Kidney (tissue), 22 donors: ENCODE measurements at regions of chr7 and their contacts with region 1.

Region 1: GRCh38 chr7:108181073-108181985 is 51.2 kb upstream of the LAMB4 start:
- DNase-seq: peak in 2 of 5 donors; percentile 73 to 74
- H3K4me3 ChIP-seq: no peak overlapping the region
- H3K27ac ChIP-seq: no peak overlapping the region
- H3K4me1 ChIP-seq: no peaks in the 10 kb centered on the region
- H3K27me3 ChIP-seq: no peaks in the 10 kb centered on the region
- CTCF ChIP-seq: peak; percentile 75

Region 2: GRCh38 chr7:108045154-108045553 is 136.2 kb before region 1 on chr7:
- intact Hi-C with region 1: no loop called
- DNase-seq: peak in 1 of 5 donors; percentile 34
- H3K4me3 ChIP-seq: no peak overlapping the region
- H3K27ac ChIP-seq: no peak overlapping the region
- H3K4me1 ChIP-seq: no peaks in the 10 kb centered on the region
- H3K27me3 ChIP-seq: no peaks in the 10 kb centered on the region
- CTCF ChIP-seq: no peak

Region 3: DNA sequence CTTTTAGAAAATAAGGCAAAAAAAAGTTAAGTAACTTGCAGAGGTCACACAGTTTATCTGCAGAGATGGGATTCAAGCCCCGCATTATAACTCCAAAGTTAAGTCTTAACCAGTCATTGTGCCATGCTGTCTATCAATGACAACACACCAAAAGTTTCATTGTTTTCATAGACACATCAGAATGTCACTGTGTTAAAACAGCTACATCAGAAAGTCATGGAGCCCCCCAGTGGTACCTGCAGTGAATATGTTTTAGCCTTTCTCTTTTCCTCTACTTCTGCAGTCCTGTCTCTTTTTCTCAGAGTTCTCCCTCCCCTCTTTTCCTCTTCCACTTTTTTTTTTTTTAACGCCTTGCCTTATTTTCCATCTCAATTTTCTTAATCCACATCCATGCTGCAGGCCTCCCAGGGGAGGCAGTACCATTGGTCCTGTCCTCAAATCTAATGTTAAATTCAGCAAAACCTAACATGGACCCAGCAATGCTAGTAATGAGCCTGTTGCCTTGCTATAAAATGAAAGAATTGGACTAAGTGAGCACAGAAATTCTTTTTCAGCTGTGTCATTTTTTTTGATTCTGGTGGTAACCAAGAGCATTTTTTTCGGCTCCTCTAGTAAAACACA is 278.7 kb after region 1 on chr7:
- intact Hi-C with region 1: loop called (anchors 10 kb)
- DNase-seq: peak in 3 of 5 donors; percentile 28 to 60 (median 32)
- H3K4me3 ChIP-seq: no peak overlapping the region
- H3K27ac ChIP-seq: no peak overlapping the region
- H3K4me1 ChIP-seq: peaks cover 0 to 9% (median 3%) of the 10 kb centered on the region in 3 donors
- H3K27me3 ChIP-seq: peaks cover 8% of the 10 kb centered on the region
- CTCF ChIP-seq: peak; percentile 44